ENCODE measurements at regions of chr15 and their contacts with region 1.

Region 1: DNA sequence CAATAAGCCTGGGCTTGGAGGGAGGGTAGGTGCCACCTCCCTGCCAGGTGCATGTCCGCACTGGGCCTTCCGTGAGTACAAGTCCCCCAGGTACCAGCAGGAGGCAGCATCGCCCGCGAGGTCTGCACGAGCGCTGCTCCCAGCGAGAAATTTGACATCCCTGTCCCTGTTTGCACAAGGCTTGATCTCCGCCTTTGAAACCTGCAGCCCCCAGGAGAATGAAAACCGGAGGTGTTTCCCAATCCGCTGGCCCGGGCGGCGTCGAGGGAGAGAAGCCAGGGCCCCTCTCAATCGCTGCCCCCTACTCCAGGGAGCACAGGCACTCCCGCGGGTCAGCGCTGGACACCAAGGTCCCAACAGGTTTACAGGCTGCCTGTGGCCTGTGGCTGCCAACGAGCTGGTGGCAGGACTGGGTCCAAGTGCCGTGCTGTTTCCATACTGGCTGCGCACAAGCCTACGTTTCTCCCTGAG is 961 bp downstream of the HAPLN3 start:
- DNase-seq: peak; percentile 75 to 91 (median 84)
- ATAC-seq: peak; percentile 58 to 70
- H3K4me3 Mint-ChIP-seq: peak overlapping the region; percentile 77 to 97 (median 92)
- H3K27ac Mint-ChIP-seq: peak overlapping the region in 8 of 10 donors; percentile 40 to 95 (median 90)
- H3K4me1 Mint-ChIP-seq: peaks cover 20 to 50% (median 38%) of the 10 kb centered on the region in 4 donors
- H3K27me3 Mint-ChIP-seq: peaks cover 0 to 3% (median 0%) of the 10 kb centered on the region in 5 donors

Region 2: GRCh38 chr15:88859550-88859949 is 34.8 kb before region 1 on chr15:
- POLR2A ChIA-PET with region 1: no interaction called
- DNase-seq: no peak
- ATAC-seq: no peak
- H3K4me3 Mint-ChIP-seq: no peak overlapping the region
- H3K27ac Mint-ChIP-seq: no peak overlapping the region
- H3K4me1 Mint-ChIP-seq: no peaks in the 10 kb centered on the region
- H3K27me3 Mint-ChIP-seq: peaks cover 0 to 2% (median 0%) of the 10 kb centered on the region in 5 donors

Region 3: DNA sequence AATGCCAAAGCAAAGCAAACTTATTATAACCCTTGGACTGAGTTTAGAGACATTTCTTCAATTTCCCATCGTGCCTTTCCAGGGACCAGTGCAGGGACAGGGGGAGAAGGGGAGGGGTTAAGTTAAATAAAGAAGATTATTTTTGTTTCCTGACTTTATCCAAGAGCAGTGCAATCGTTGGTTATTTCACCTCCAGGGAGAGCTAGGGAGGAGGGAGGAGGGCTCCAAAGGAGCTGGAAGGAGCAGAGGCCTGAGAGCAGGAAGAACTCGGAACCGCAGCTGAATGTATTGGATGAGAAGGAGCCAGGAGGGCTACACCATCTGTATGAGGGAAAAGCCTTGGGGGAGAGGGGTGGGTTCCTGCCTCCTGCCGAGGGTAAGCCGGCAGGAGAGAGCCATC is 19.7 kb before region 1 on chr15:
- POLR2A ChIA-PET with region 1: no interaction called
- DNase-seq: no peak
- ATAC-seq: no peak
- H3K4me3 Mint-ChIP-seq: no peak overlapping the region
- H3K27ac Mint-ChIP-seq: peak overlapping the region in 1 of 10 donors; percentile 86
- H3K4me1 Mint-ChIP-seq: peaks cover 0 to 7% (median 2%) of the 10 kb centered on the region in 4 donors
- H3K27me3 Mint-ChIP-seq: no peaks in the 10 kb centered on the region

Region 4: GRCh38 chr15:88904624-88905327 is 10.4 kb after region 1 on chr15:
- POLR2A ChIA-PET with region 1: interaction called, 30 read pairs
- DNase-seq: peak; percentile 83 to 98 (median 96)
- ATAC-seq: peak; percentile 97 to 99
- H3K4me3 Mint-ChIP-seq: peak overlapping the region; percentile 5 to 87 (median 60)
- H3K27ac Mint-ChIP-seq: peak overlapping the region; percentile 84 to 98 (median 96)
- H3K4me1 Mint-ChIP-seq: peaks cover 31 to 61% (median 51%) of the 10 kb centered on the region in 4 donors
- H3K27me3 Mint-ChIP-seq: no peaks in the 10 kb centered on the region

Region 5: DNA sequence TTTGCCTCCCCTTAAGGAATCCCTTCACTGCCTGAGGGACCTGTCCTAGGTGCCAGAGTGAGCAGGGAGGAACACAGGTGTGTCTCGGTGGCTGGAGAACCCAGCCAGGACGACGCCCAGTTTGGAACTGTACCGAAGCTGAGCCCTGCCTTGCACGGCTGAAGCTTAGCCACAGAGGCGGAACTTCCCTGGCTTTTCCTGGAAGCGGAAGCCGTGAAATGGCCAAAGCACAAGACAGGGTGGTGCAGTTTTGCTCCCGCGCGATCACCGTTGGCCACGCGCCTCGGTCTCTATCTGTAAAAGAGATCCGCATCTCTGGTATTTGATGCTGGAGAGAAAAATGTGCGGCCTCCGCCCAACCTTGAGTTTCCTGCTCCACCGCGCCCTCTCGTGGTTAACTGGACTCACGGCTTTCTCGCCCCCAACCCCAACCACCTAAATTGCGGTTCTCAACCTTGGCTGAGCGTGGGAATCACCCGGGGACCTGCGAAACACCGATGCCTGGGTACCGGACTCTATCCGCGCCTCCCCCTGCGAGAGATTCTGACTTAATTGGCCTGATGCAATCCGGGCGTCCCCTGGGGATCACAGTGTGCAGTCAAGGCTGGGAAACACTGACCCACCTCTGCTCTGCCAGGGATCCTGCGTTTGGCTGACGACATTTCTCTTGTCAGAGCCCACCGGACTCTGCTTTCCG is 123.1 kb after region 1 on chr15:
- POLR2A ChIA-PET with region 1: interaction called, 15 read pairs
- DNase-seq: peak; percentile 69 to 91 (median 79)
- ATAC-seq: peak; percentile 96 to 97
- H3K4me3 Mint-ChIP-seq: peak overlapping the region; percentile 50 to 77 (median 68)
- H3K27ac Mint-ChIP-seq: peak overlapping the region in 9 of 10 donors; percentile 64 to 90 (median 75)
- H3K4me1 Mint-ChIP-seq: peaks cover 4 to 15% (median 11%) of the 10 kb centered on the region in 4 donors
- H3K27me3 Mint-ChIP-seq: peaks cover 0 to 20% (median 3%) of the 10 kb centered on the region in 5 donors